Activated B cell treated with CpG ODN at 0.5 μM for 24 hours (primary cell): ENCODE measurements at regions of chr3 and their contacts with region 1.

Region 1: DNA sequence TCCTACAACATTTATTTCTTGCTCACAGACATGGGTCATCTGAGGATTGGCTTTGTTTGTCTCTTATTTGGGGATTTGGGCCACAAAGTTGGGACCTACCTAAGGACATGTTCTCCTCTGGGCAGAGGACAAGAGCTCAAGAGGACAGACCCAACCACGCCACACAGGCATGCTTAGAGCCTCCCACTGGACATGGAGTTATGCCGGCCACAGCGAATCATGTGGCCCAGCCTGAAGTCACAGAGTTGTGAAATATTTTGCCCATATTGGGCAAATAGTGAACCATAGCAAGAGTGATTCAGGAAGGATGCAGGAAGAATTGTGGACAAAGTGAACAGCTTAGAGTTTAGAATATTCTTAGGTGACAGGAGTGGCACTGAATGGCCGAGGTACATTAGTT is 9.9 kb downstream of the TRAK1 start:
- DNase-seq: no peak
- ATAC-seq: no peak
- H3K4me3 Mint-ChIP-seq: no peak overlapping the region
- H3K27ac Mint-ChIP-seq: peak overlapping the region; percentile 24
- H3K4me1 Mint-ChIP-seq: peaks cover 37% of the 10 kb centered on the region
- H3K27me3 Mint-ChIP-seq: no peaks in the 10 kb centered on the region
- CTCF ChIP-seq: no peak

Region 2: GRCh38 chr3:41987627-41988026 is 113.4 kb before region 1 on chr3:
- CTCF ChIA-PET with region 1: interaction called, 3 read pairs
- POLR2A ChIA-PET with region 1: interaction called, 12 read pairs
- intact Hi-C with region 1: no loop called
- DNase-seq: no peak
- ATAC-seq: no peak
- H3K4me3 Mint-ChIP-seq: no peak overlapping the region
- H3K27ac Mint-ChIP-seq: no peak overlapping the region
- H3K4me1 Mint-ChIP-seq: no peaks in the 10 kb centered on the region
- H3K27me3 Mint-ChIP-seq: no peaks in the 10 kb centered on the region
- CTCF ChIP-seq: no peak

Region 3: GRCh38 chr3:42036483-42036823 is 64.6 kb before region 1 on chr3:
- CTCF ChIA-PET with region 1: interaction called, 11 read pairs
- POLR2A ChIA-PET with region 1: no interaction called
- intact Hi-C with region 1: no loop called
- DNase-seq: no peak
- ATAC-seq: peak; percentile 51
- H3K4me3 Mint-ChIP-seq: peak overlapping the region; percentile 55
- H3K27ac Mint-ChIP-seq: peak overlapping the region; percentile 86
- H3K4me1 Mint-ChIP-seq: peaks cover 90% of the 10 kb centered on the region
- H3K27me3 Mint-ChIP-seq: no peaks in the 10 kb centered on the region
- CTCF ChIP-seq: no peak

Region 4: GRCh38 chr3:42080452-42080891 is 20.6 kb before region 1 on chr3:
- CTCF ChIA-PET with region 1: interaction called, 28 read pairs
- POLR2A ChIA-PET with region 1: interaction called, 3 read pairs
- intact Hi-C with region 1: no loop called
- DNase-seq: peak; percentile 51
- ATAC-seq: peak; percentile 94
- H3K4me3 Mint-ChIP-seq: peak overlapping the region; percentile 74
- H3K27ac Mint-ChIP-seq: peak overlapping the region; percentile 97
- H3K4me1 Mint-ChIP-seq: peaks cover 85% of the 10 kb centered on the region
- H3K27me3 Mint-ChIP-seq: no peaks in the 10 kb centered on the region
- CTCF ChIP-seq: no peak